ENCODE measurements at regions of chr4 and their contacts with region 1.

Region 1: DNA sequence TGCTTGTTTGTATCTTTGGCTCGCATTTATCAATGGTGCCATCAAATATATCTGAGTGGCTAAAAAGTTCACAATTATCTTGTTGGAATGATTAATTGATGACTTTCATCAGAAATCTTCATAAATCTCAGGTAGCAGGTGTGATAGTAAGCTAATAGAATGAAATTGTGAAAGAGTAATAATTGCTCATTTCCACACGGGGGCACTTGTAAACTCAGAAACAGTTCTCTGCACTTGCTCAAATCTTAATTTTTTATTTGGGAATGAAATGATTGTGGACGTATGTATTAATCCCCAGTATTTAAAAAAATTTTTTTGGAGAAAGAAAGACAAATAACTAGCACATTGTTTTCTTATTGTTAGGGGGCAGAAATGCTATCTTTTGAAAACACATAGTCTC is 132.8 kb downstream of the DTHD1 start:
- DNase-seq: peak; percentile 36
- H3K4me3 Mint-ChIP-seq: no peak overlapping the region
- H3K27ac Mint-ChIP-seq: no peak overlapping the region
- H3K4me1 Mint-ChIP-seq: no peaks in the 10 kb centered on the region
- H3K27me3 Mint-ChIP-seq: no peaks in the 10 kb centered on the region
- CTCF ChIP-seq: peak; percentile 48

Region 2: DNA sequence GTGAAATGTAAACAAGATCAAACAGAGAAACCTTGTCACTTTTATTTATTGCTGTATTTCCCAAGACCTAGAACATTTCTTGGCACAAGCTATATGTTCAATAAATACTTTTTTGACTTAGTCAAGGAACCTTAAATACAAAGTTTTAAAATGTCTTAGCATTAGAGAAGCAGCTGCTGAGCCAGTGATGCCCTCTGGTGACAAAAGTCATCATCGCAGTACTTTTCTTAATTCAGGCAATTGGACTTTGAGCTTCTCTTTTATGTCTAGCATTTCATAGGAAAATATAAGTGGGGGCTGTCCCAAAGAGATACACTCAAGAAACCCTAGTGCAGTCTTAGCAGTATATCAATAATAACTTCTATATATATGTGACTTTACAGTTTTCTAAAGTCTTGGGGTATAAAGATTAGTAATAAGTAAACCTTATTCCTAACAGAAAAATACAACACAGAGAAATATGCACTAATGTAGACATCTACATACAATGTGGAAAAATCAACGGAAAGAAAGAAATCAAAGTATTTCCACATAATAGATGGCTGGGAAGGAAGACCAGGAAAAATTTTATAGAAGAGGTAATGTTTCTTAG is 14.4 kb before region 1 on chr4:
- CTCF ChIA-PET with region 1: interaction called, 12 read pairs
- POLR2A ChIA-PET with region 1: no interaction called
- intact Hi-C with region 1: no loop called
- DNase-seq: peak; percentile 47
- H3K4me3 Mint-ChIP-seq: no peak overlapping the region
- H3K27ac Mint-ChIP-seq: no peak overlapping the region
- H3K4me1 Mint-ChIP-seq: peaks cover under 1% of the 10 kb centered on the region
- H3K27me3 Mint-ChIP-seq: no peaks in the 10 kb centered on the region
- CTCF ChIP-seq: peak; percentile 76

Region 3: DNA sequence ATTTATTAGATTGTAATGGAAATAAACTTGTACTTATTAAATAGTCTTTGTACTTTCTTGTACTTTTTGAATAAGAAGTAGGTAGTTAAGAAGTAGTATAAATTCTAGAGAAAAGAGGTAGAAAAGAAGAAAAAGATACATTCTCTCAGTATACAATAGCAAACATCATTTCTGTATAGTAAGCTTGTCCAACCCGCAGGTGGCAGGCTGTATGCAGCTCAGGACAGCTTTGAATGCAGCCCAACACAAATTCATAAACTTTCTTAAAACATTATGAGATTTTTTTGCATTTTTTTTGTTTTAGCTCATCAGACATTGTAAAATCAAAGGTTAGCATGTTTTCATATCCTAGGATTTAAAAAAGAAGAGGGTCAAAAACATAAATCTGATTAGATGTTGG is 308.7 kb after region 1 on chr4:
- CTCF ChIA-PET with region 1: no interaction called
- POLR2A ChIA-PET with region 1: no interaction called
- intact Hi-C with region 1: loop called (anchors 10 kb)
- DNase-seq: no peak
- H3K4me3 Mint-ChIP-seq: no peak overlapping the region
- H3K27ac Mint-ChIP-seq: no peak overlapping the region
- H3K4me1 Mint-ChIP-seq: no peaks in the 10 kb centered on the region
- H3K27me3 Mint-ChIP-seq: no peaks in the 10 kb centered on the region
- CTCF ChIP-seq: peak; percentile 30

Region 4: DNA sequence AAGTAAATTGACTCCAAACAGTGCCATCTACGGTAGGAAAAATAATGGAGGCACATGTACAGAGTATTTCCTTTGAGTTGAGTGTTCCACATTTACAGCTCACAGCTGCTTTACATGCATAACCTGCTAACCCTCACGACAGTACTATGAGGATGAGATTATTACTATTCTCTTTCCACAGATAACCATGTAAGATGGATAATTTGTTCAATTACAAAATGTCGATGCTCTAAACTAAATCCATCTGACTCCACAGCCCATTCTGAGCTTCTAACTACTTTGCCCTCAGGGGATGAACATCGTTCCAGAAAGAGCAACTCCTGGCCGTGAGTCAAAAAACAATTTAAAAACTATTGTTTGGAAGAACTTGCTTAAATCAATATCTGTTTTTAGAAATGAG is 499.9 kb after region 1 on chr4:
- CTCF ChIA-PET with region 1: no interaction called
- POLR2A ChIA-PET with region 1: no interaction called
- intact Hi-C with region 1: loop called (anchors 10 kb)
- DNase-seq: peak; percentile 11
- H3K4me3 Mint-ChIP-seq: no peak overlapping the region
- H3K27ac Mint-ChIP-seq: no peak overlapping the region
- H3K4me1 Mint-ChIP-seq: no peaks in the 10 kb centered on the region
- H3K27me3 Mint-ChIP-seq: no peaks in the 10 kb centered on the region
- CTCF ChIP-seq: no peak

Region 5: GRCh38 chr4:37157476-37158167 is 743.4 kb after region 1 on chr4:
- CTCF ChIA-PET with region 1: interaction called, 3 read pairs
- POLR2A ChIA-PET with region 1: no interaction called
- intact Hi-C with region 1: loop called (anchors 1 kb)
- DNase-seq: peak; percentile 11
- H3K4me3 Mint-ChIP-seq: no peak overlapping the region
- H3K27ac Mint-ChIP-seq: no peak overlapping the region
- H3K4me1 Mint-ChIP-seq: no peaks in the 10 kb centered on the region
- H3K27me3 Mint-ChIP-seq: no peaks in the 10 kb centered on the region
- CTCF ChIP-seq: no peak

Region 6: GRCh38 chr4:37383579-37384229 is 969.5 kb after region 1 on chr4:
- CTCF ChIA-PET with region 1: interaction called, 15 read pairs
- POLR2A ChIA-PET with region 1: interaction called, 5 read pairs
- intact Hi-C with region 1: loop called (anchors 1 kb)
- DNase-seq: peak; percentile 65
- H3K4me3 Mint-ChIP-seq: no peak overlapping the region
- H3K27ac Mint-ChIP-seq: no peak overlapping the region
- H3K4me1 Mint-ChIP-seq: no peaks in the 10 kb centered on the region
- H3K27me3 Mint-ChIP-seq: no peaks in the 10 kb centered on the region
- CTCF ChIP-seq: peak; percentile 66

Region 7: DNA sequence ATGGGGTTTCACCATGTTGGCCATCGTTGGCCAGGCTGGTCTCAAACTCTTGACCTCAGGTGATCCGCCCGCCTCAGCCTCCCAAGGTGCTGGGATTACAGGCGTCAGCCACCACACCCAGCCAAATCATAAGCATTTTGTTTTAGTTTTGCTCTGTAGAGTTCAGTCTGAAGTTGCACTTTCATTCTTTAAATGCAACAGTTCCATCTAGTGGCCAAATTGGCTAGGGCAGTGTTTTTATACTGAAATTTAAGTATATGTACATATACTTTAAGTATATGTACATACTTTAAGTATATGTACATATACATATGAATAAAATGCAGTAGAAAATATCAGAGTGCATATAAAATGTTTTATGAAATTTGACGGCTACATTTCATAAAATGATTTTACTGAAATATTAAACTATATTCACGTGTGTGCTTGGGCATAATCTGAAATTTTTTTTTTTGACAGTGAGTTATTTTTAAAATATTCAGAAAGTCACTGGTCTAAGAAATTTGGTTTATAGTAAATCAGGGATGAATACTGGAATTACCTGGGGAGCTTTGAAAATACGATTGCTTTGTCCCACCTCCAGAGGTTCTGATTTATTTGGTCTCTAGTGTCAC is 975.8 kb after region 1 on chr4:
- CTCF ChIA-PET with region 1: interaction called, 15 read pairs
- POLR2A ChIA-PET with region 1: interaction called, 5 read pairs
- intact Hi-C with region 1: loop called (anchors 1 kb)
- DNase-seq: peak; percentile 64
- H3K4me3 Mint-ChIP-seq: no peak overlapping the region
- H3K27ac Mint-ChIP-seq: no peak overlapping the region
- H3K4me1 Mint-ChIP-seq: no peaks in the 10 kb centered on the region
- H3K27me3 Mint-ChIP-seq: no peaks in the 10 kb centered on the region
- CTCF ChIP-seq: peak; percentile 60

Measured in MCF 10A (cell line).